BJ (cell line): ENCODE measurements at regions of chr7 and their contacts with region 1.

Region 1: GRCh38 chr7:48154792-48155413 is 16.4 kb upstream of the ABCA13 start:
- DNase-seq: no peak
- H3K4me3 ChIP-seq: no peak overlapping the region
- H3K27me3 ChIP-seq: no peaks in the 10 kb centered on the region
- CTCF ChIP-seq: peak; percentile 87

Region 2: GRCh38 chr7:47979145-47979831 is 175.6 kb before region 1 on chr7 and contains the start of gene HUS1:
- CTCF ChIA-PET with region 1: interaction called, 11 read pairs
- POLR2A ChIA-PET with region 1: no interaction called
- DNase-seq: peak; percentile 33
- H3K4me3 ChIP-seq: peak within 1 kb of the TSS; percentile 74
- H3K27me3 ChIP-seq: no peaks in the 10 kb centered on the region
- CTCF ChIP-seq: no peak
- polyA plus RNA-seq, gene HUS1: 14.1 and 23.7 TPM in 2 replicates

Region 3: DNA sequence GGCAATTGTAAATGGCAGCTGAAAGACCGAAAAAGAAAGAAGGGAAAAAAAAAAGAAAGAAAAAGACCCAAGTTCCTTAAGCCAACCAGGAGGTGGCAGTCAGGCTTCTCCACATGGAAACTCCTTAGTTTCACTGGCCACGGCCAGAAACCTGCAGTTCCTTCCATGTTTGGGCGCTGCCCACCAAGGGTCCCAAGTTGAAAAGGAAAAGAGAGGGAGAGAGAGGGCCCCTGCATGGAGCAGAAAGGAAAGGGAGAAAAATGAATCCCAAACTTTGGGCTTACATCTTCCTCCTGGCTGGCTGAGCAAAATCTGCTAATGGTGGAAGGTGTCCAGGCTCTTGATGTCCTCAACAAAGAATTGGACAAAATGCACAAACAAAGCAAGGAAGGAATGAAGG is 15.4 kb before region 1 on chr7:
- CTCF ChIA-PET with region 1: interaction called, 27 read pairs
- POLR2A ChIA-PET with region 1: interaction called, 5 read pairs
- DNase-seq: no peak
- H3K4me3 ChIP-seq: no peak overlapping the region
- H3K27me3 ChIP-seq: no peaks in the 10 kb centered on the region
- CTCF ChIP-seq: peak; percentile 56

Region 4: DNA sequence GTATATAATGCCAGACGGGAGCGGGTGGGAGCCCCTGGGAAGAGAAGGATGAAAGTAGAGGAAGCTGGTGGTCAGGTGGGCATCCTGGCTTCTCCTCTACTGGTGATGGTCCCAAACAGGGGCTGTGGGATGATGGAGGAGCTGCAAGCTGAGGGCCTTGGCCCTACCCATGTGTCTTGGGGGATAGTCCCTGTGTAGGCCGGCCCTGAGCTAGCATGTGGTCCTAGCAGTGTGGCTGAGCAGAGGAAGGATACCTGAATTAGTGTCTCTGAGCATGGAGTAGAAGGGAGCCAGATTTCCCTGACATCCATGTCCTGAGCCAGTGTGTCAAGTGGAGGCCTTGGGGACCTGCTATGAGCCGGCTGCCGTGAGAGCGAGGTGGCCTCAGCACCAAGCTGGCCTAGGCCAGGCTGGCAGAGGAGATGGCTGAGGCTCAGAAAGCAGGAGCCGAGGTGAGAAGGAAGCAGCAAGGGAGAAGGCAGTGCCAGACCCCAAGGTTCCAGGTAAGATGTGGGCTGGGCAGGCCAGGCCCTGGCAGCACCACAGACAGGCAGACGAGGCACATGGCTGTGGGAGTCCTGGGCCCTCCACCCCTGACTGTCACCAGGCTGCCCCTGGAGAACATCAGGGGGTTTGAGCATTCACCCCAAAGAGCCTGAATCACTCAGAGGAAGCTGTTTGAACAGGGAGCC is 166.6 kb after region 1 on chr7:
- CTCF ChIA-PET with region 1: no interaction called
- POLR2A ChIA-PET with region 1: no interaction called
- DNase-seq: no peak
- H3K4me3 ChIP-seq: no peak overlapping the region
- H3K27me3 ChIP-seq: no peaks in the 10 kb centered on the region
- CTCF ChIP-seq: no peak

Region 5: DNA sequence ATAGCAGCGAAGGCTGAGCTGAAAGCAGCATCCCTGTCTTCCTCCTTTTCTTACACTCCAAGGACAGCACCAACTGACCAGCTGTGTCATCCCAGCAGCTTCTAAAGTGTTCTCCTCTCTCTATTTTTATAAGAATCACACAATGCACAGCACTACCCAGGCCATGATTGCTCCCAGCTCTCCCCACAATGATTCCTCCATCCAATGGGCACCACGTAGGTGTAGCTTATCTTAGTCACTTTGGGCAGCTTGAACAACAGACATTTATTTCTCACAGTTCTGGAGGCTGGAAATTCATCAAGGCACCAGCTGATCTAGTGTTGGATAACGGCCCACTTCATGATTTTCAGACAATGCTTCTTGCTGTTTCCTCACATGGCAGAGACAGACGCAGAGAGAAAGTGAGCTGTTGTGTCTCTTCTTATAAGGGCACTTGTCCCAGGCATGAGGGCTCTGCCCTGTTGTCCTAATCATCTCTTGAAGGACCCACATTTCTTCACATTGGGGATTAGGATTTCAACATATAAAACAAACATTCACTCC is 677.5 kb after region 1 on chr7:
- CTCF ChIA-PET with region 1: no interaction called
- POLR2A ChIA-PET with region 1: no interaction called
- DNase-seq: no peak
- H3K4me3 ChIP-seq: no peak overlapping the region
- H3K27me3 ChIP-seq: no peaks in the 10 kb centered on the region
- CTCF ChIP-seq: no peak